ENCODE measurements at regions of chr14 and their contacts with region 1.

Region 1: DNA sequence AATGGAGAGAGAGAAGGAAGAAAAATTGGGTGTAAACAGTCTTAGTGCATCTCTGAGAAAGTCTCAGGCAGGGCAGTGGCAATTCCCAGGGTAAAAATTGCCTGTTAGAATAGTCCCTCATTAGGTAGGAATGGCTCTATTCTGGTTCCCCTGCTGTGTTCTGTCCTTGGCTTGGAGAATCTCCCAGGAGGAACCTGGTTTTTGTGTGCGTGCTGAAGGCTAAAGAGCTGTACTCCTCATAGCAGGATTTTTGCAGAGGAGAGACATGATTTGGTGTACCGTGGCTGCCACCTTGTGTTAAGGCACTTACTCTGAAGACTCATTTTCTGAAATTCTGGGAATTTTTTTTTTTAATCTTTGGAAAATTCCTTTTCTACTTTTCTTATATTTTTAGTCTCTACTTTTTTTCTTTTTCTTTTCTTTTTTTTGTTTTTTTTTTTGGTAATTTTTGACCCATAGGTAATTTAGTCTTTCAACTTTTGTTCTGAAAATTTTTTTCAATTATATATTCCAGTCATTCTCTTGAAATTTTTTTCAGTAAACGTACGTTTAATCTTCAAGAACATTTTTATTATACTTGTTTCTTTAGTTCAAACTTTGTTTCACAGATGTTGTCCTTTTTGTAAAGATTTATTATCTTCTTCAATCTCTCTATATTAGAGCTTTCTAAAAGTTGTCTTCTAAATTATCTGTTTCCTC is 63.8 kb downstream of the FBXO33 start:
- DNase-seq: peak; percentile 40
- H3K4me3 ChIP-seq: no peak overlapping the region
- CTCF ChIP-seq: peak; percentile 47

Region 2: DNA sequence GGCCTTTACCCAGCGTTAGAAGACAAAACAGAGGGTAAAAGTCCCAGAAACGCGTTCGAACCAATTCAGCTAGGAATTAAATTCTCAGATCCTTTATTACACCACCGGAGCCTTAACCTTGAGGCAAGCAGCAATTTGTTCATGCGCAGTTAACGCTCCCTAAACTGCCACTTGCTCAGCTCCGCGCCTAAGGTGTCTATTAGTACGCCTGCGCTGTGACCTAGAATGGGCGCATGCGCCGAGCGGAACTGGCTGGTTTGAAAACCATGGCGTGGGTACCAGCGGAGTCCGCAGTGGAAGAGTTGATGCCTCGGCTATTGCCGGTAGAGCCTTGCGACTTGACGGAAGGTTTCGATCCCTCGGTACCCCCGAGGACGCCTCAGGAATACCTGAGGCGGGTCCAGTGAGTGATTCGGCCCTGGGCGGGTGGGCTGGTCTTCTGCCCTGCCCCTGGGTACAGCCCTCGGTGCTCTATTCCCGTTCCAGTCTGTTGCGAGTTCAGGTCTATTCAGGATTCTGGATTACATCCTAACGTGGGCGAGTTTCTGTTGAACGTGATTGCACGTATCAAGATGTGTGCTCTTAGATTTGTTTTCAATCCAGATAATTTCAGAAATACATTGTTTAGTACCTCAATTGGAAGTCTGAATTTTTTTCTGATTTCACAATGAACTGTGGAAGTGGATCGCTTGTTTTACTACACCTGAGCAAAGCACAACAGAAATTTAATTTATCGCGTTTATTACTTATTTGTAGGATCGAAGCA is 254.2 kb before region 1 on chr14 and contains the start of gene GEMIN2:
- CTCF ChIA-PET with region 1: interaction called, 13 read pairs
- POLR2A ChIA-PET with region 1: no interaction called
- DNase-seq: peak; percentile 54
- H3K4me3 ChIP-seq: peak within 1 kb of the TSS; percentile 86
- CTCF ChIP-seq: no peak

Region 3: DNA sequence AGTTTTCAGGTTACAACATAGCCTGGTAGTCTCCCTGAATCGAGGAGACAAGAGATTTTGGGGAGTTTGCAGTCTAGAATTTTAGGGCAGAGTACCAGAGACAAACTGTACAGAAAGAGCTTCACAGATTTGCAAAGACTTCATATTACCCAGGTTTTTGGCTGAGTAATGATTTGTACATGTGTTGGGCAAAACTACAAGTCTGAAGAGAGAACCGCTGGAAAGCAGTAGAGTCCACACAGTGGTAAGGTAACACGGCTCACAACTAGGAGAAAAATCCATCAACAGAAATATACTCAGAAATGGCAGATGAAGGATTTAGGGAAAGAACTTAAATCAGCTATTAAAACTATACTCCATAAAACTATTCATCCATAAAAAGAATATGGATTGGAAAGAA is 38.1 kb after region 1 on chr14:
- CTCF ChIA-PET with region 1: no interaction called
- POLR2A ChIA-PET with region 1: no interaction called
- DNase-seq: no peak
- H3K4me3 ChIP-seq: no peak overlapping the region
- CTCF ChIP-seq: no peak

Region 4: DNA sequence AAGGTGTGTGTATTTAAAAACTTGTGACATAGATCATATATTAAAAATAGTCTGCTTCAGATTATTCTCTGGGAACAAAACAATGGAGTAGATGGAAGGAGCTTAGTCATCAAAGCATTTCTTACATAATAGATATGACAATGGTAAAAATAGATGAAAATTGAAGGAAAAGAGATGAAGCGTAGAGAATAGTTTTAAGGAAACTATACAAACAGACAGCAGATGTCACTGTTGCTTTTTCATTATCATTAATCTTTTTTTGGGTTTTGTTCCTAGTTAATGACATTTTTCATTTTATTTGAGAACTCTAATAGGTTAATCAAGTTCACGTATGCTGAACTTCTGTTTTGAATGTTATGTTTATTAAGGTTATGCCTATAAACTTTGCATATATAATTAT is 213.1 kb after region 1 on chr14:
- CTCF ChIA-PET with region 1: no interaction called
- POLR2A ChIA-PET with region 1: no interaction called
- DNase-seq: no peak
- H3K4me3 ChIP-seq: no peak overlapping the region
- CTCF ChIP-seq: no peak